Activated CD4-positive, alpha-beta memory T cell treated with anti-CD3 and anti-CD28 coated beads, Interleukin-2, amount 10 ng/mL, durations not matched to agents 7 days and 5 days (primary cell): ENCODE measurements at regions of chr4 and their contacts with region 1.

Region 1: GRCh38 chr4:2954358-2955185 is 8.6 kb downstream of the NOP14 start:
- DNase-seq: peak; percentile 63
- H3K4me3 Mint-ChIP-seq: peak overlapping the region; percentile 44
- H3K27ac Mint-ChIP-seq: peak overlapping the region; percentile 93
- H3K4me1 Mint-ChIP-seq: peaks cover 59% of the 10 kb centered on the region
- H3K27me3 Mint-ChIP-seq: no peaks in the 10 kb centered on the region

Region 2: DNA sequence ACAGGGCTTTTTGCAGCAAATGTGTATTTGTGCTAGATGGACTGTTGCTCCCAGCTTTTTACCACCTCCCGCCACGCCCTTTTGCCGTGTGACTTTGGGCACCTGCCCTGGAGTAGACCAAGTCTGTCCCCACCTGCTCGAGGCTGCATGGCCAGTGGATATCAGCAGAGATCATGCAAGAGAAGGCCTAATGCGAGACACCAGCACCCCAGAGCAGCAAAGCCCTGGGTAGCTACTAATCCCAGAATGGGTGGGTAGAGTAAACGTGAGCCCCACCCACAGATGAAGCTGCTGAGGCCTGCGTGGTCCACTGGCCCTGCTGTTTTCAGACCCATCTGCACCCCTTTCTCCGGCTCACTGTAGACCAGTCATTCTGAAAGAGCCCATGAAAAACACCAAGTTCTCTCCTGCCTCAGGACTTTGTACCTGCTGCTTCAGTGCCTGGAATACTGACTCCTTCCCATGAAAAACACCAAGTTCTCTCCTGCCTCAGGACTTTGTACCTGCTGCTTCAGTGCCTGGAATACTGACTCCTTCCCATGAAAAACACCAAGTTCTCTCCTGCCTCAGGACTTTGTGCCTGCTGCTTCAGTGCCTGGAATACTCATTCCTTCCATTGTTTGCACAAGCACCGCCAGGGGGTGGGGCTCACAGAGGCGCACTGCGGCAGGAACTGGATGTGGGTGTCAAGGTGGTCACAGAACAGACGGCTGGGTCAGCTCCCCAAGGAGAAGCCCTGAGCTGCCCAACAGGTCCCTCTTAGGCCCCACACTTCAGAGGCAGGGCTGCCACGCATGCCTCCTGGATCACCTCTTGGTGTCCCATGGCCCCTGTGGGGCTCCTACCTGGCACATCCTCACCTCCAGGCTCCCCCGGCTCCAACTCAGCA is 193.3 kb before region 1 on chr4:
- CTCF ChIA-PET with region 1: interaction called, 22 read pairs
- POLR2A ChIA-PET with region 1: interaction called, 9 read pairs
- DNase-seq: peak; percentile 46
- H3K4me3 Mint-ChIP-seq: no peak overlapping the region
- H3K27ac Mint-ChIP-seq: no peak overlapping the region
- H3K4me1 Mint-ChIP-seq: peaks cover 25% of the 10 kb centered on the region
- H3K27me3 Mint-ChIP-seq: no peaks in the 10 kb centered on the region

Region 3: GRCh38 chr4:2942532-2943320 is 11.8 kb before region 1 on chr4:
- CTCF ChIA-PET with region 1: interaction called, 64 read pairs
- POLR2A ChIA-PET with region 1: interaction called, 95 read pairs
- DNase-seq: peak; percentile 48
- H3K4me3 Mint-ChIP-seq: peak overlapping the region; percentile 36
- H3K27ac Mint-ChIP-seq: peak overlapping the region; percentile 82
- H3K4me1 Mint-ChIP-seq: peaks cover 43% of the 10 kb centered on the region
- H3K27me3 Mint-ChIP-seq: no peaks in the 10 kb centered on the region